Activated CD4-positive, alpha-beta memory T cell treated with anti-CD3 and anti-CD28 coated beads, Interleukin-2, amount 10 ng/mL, durations not matched to agents 7 days and 5 days (primary cell): ENCODE measurements at regions of chr12 and their contacts with region 1.

Region 1: GRCh38 chr12:48995061-48995879 is 3.9 kb downstream of the DDN start:
- DNase-seq: peak; percentile 62
- H3K4me3 Mint-ChIP-seq: no peak overlapping the region
- H3K27ac Mint-ChIP-seq: no peak overlapping the region
- H3K4me1 Mint-ChIP-seq: peaks cover 32% of the 10 kb centered on the region
- H3K27me3 Mint-ChIP-seq: peaks cover 67% of the 10 kb centered on the region

Region 2: GRCh38 chr12:48977315-48978281 is 17.7 kb before region 1 on chr12:
- CTCF ChIA-PET with region 1: interaction called, 41 read pairs
- POLR2A ChIA-PET with region 1: interaction called, 5 read pairs
- DNase-seq: peak; percentile 79
- H3K4me3 Mint-ChIP-seq: peak overlapping the region; percentile 45
- H3K27ac Mint-ChIP-seq: no peak overlapping the region
- H3K4me1 Mint-ChIP-seq: peaks cover 59% of the 10 kb centered on the region
- H3K27me3 Mint-ChIP-seq: peaks cover 91% of the 10 kb centered on the region

Region 3: DNA sequence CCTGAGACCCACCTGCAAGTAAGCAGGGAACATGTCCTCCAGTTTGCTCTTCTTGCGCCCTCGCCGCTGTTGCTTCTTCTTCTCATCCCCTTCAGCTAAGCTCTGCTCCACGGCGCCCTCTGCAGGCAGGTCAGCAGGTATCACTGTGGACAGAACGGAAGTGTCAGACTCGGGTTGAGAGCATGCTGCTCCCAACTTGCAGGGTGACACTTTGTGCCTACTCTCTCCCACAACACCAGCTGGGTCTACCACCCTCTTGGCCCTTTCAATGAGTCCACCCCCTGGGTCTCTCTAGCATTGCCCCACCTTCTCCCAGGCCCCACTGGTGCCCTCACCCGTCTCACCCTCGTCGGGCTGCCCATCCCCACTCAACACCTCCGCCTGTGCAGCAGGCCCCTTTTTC is 48.6 kb after region 1 on chr12:
- CTCF ChIA-PET with region 1: interaction called, 13 read pairs
- POLR2A ChIA-PET with region 1: interaction called, 4 read pairs
- DNase-seq: peak; percentile 83
- H3K4me3 Mint-ChIP-seq: no peak overlapping the region
- H3K27ac Mint-ChIP-seq: peak overlapping the region; percentile 51
- H3K4me1 Mint-ChIP-seq: peaks cover 5% of the 10 kb centered on the region
- H3K27me3 Mint-ChIP-seq: no peaks in the 10 kb centered on the region